T-cell (primary cell): ENCODE measurements at regions of chr13 and their contacts with region 1.

Region 1: GRCh38 chr13:39616087-39616694 is 13.2 kb upstream of the LHFPL6 start:
- DNase-seq: peak in 23 of 35 experiments; percentile 7 to 73 (median 23)
- ATAC-seq: peak; percentile 70 to 75 (median 74)
- H3K4me3 ChIP-seq: no peak overlapping the region
- H3K4me3 Mint-ChIP-seq: no peak overlapping the region
- H3K27ac ChIP-seq: no peak overlapping the region
- H3K27ac Mint-ChIP-seq: no peak overlapping the region
- H3K4me1 ChIP-seq: no peaks in the 10 kb centered on the region
- H3K4me1 Mint-ChIP-seq: no peaks in the 10 kb centered on the region
- H3K27me3 ChIP-seq: peaks cover 0 to 5% of the 10 kb centered on the region in 2 experiments
- H3K27me3 Mint-ChIP-seq: peaks cover 8 to 12% of the 10 kb centered on the region in 2 donors

Region 2: DNA sequence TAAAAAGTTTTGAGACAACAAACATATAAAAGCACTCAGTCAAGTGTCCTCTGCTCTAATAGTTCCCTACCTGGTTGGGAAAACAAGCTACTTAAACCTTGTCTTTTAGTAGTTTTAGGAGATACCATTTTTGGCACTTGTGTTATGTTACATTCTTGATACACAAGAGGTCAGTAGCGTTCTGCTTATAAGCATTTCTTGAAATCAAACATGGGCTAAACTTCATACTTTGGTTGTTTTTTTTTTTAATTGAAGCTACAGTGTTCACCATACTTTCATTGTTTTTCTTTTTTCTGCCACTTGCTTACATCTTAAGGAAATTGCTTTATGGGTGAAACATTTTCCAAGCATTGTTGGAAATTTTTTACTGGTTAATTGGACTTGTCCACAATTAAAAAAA is 565.0 kb before region 1 on chr13:
- CTCF ChIA-PET with region 1: interaction called, 6 to 33 read pairs
- POLR2A ChIA-PET with region 1: no interaction called
- DNase-seq: peak in 1 of 35 experiments; percentile 54
- ATAC-seq: no peak
- H3K4me3 ChIP-seq: no peak overlapping the region
- H3K4me3 Mint-ChIP-seq: no peak overlapping the region
- H3K27ac ChIP-seq: no peak overlapping the region
- H3K27ac Mint-ChIP-seq: no peak overlapping the region
- H3K4me1 ChIP-seq: no peaks in the 10 kb centered on the region
- H3K4me1 Mint-ChIP-seq: peaks cover 6 to 10% (median 6%) of the 10 kb centered on the region in 3 donors
- H3K27me3 ChIP-seq: no peaks in the 10 kb centered on the region
- H3K27me3 Mint-ChIP-seq: no peaks in the 10 kb centered on the region

Region 3: DNA sequence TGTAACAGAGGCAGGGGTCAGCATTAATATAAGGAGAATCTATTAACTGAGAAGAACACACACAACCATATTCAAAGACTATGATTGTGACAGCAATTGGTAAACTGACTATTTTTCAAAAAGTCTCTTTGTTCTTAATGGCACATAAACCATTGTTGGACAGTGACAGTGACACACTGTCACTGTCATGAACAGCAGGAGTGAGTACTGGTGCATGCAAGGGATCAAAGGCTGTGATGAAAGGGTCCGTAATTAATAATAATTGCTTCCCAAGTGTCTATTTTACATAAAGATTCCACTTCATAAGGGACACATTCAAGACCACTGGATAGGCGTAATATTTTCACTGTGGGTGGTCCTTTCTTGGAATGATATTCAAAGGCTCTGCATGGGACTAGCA is 63.9 kb before region 1 on chr13:
- CTCF ChIA-PET with region 1: no interaction called
- POLR2A ChIA-PET with region 1: no interaction called
- DNase-seq: no peak
- ATAC-seq: no peak
- H3K4me3 ChIP-seq: no peak overlapping the region
- H3K4me3 Mint-ChIP-seq: no peak overlapping the region
- H3K27ac ChIP-seq: no peak overlapping the region
- H3K27ac Mint-ChIP-seq: no peak overlapping the region
- H3K4me1 ChIP-seq: no peaks in the 10 kb centered on the region
- H3K4me1 Mint-ChIP-seq: no peaks in the 10 kb centered on the region
- H3K27me3 ChIP-seq: peaks cover 0 to 2% of the 10 kb centered on the region in 2 experiments
- H3K27me3 Mint-ChIP-seq: peaks cover 6 to 23% of the 10 kb centered on the region in 2 donors

Region 4: GRCh38 chr13:39684531-39685137 is 68.4 kb after region 1 on chr13:
- CTCF ChIA-PET with region 1: no interaction called
- POLR2A ChIA-PET with region 1: no interaction called
- DNase-seq: peak in 1 of 35 experiments; percentile 44
- ATAC-seq: no peak
- H3K4me3 ChIP-seq: no peak overlapping the region
- H3K4me3 Mint-ChIP-seq: no peak overlapping the region
- H3K27ac ChIP-seq: no peak overlapping the region
- H3K27ac Mint-ChIP-seq: no peak overlapping the region
- H3K4me1 ChIP-seq: no peaks in the 10 kb centered on the region
- H3K4me1 Mint-ChIP-seq: peaks cover 5 to 16% (median 8%) of the 10 kb centered on the region in 3 donors
- H3K27me3 ChIP-seq: no peaks in the 10 kb centered on the region
- H3K27me3 Mint-ChIP-seq: no peaks in the 10 kb centered on the region

Region 5: DNA sequence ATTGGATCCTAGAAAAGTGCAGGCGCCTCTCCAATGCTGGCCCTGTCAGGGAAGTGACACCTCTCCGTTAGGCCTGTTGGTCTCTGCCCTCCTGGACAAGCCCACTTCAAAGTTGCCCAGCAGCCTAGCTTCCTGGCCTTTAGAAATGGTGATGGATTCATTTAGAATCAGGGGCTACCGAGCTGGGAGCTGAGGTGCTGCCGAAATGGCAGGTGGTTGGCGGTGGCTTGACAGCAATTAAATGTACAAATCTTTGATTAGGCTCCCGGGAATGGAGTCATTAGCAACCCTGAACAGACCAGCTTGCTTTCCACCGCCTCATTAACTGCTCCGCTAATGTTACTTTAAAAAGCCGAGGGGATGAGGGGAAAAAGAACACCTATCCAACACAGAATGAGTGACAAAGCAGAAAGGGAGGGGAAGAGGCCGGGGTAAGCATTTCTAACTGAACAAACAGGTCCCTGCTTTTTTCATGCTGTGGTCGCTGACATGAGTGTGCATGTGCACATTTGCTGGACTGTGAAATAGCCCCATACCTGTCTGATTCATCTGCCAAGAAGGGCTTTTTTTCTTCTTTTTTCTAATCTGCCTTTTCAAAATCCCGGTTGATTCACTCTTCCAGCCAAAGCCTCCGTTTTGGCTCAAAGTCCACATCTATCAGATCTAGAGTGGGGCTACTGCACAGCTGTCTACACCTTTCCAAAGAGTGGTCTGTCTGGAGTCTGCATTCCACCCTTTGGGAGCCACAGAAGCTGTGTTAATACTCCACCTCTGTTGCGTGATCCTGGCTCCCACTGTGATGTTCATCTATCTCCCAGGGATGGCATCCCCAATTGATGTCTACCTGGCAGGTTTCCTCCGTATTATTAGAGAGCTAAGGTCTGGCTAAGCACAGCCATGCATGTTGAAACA is 471.2 kb after region 1 on chr13:
- CTCF ChIA-PET with region 1: no interaction called
- POLR2A ChIA-PET with region 1: no interaction called
- DNase-seq: no peak
- ATAC-seq: no peak
- H3K4me3 ChIP-seq: no peak overlapping the region
- H3K4me3 Mint-ChIP-seq: no peak overlapping the region
- H3K27ac ChIP-seq: no peak overlapping the region
- H3K27ac Mint-ChIP-seq: no peak overlapping the region
- H3K4me1 ChIP-seq: no peaks in the 10 kb centered on the region
- H3K4me1 Mint-ChIP-seq: no peaks in the 10 kb centered on the region
- H3K27me3 ChIP-seq: no peaks in the 10 kb centered on the region
- H3K27me3 Mint-ChIP-seq: no peaks in the 10 kb centered on the region

Region 6: DNA sequence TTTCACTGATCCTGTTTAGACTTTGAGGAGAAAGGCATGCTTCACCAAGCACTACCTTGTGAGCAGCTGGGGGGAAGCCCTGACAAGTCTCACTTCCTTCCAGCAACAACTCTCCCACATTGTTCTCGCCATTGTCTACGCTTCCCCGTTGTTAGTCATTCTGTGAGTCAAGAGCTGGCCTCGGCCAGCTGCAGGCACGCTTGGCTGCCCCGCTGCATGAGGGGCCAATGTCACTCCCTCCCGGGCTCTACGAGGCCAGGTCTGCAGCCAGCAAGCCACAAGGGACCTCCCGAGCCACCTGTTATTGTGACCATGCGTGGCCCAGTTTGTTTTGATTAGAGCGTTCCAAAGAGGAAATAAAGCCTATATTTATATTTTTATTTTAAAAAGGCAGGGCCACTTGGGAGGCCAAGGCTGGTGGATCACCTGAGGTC is 829.4 kb after region 1 on chr13:
- CTCF ChIA-PET with region 1: no interaction called
- POLR2A ChIA-PET with region 1: no interaction called
- DNase-seq: peak in 4 of 35 experiments; percentile 4 to 51 (median 12)
- ATAC-seq: peak in 2 of 4 experiments; percentile 27 to 48
- H3K4me3 ChIP-seq: no peak overlapping the region
- H3K4me3 Mint-ChIP-seq: no peak overlapping the region
- H3K27ac ChIP-seq: no peak overlapping the region
- H3K27ac Mint-ChIP-seq: peak overlapping the region in 1 of 2 donors; percentile 53
- H3K4me1 ChIP-seq: peaks cover 0 to 8% of the 10 kb centered on the region in 2 experiments
- H3K4me1 Mint-ChIP-seq: peaks cover 8 to 22% (median 20%) of the 10 kb centered on the region in 3 donors
- H3K27me3 ChIP-seq: peaks cover 0 to 2% of the 10 kb centered on the region in 2 experiments
- H3K27me3 Mint-ChIP-seq: no peaks in the 10 kb centered on the region